ENCODE measurements at regions of chr11 and their contacts with region 1.

Region 1: GRCh38 chr11:61102667-61103571 is 630 bp downstream of the CD5 start:
- DNase-seq: peak; percentile 77
- H3K4me3 Mint-ChIP-seq: no peak overlapping the region
- H3K27ac Mint-ChIP-seq: no peak overlapping the region
- H3K4me1 Mint-ChIP-seq: peaks cover 34% of the 10 kb centered on the region
- H3K27me3 Mint-ChIP-seq: no peaks in the 10 kb centered on the region

Region 2: GRCh38 chr11:60951899-60952741 is 150.8 kb before region 1 on chr11 and contains the start of gene SLC15A3:
- intact Hi-C with region 1: no loop called
- DNase-seq: peak; percentile 77
- H3K4me3 Mint-ChIP-seq: peak within 1 kb of the TSS; percentile 82
- H3K27ac Mint-ChIP-seq: peak within 1 kb of the TSS; percentile 74
- H3K4me1 Mint-ChIP-seq: peaks cover 16% of the 10 kb centered on the region
- H3K27me3 Mint-ChIP-seq: peaks cover 33% of the 10 kb centered on the region
- total RNA-seq, gene SLC15A3: 3.0 and 4.0 TPM in 2 replicates

Region 3: DNA sequence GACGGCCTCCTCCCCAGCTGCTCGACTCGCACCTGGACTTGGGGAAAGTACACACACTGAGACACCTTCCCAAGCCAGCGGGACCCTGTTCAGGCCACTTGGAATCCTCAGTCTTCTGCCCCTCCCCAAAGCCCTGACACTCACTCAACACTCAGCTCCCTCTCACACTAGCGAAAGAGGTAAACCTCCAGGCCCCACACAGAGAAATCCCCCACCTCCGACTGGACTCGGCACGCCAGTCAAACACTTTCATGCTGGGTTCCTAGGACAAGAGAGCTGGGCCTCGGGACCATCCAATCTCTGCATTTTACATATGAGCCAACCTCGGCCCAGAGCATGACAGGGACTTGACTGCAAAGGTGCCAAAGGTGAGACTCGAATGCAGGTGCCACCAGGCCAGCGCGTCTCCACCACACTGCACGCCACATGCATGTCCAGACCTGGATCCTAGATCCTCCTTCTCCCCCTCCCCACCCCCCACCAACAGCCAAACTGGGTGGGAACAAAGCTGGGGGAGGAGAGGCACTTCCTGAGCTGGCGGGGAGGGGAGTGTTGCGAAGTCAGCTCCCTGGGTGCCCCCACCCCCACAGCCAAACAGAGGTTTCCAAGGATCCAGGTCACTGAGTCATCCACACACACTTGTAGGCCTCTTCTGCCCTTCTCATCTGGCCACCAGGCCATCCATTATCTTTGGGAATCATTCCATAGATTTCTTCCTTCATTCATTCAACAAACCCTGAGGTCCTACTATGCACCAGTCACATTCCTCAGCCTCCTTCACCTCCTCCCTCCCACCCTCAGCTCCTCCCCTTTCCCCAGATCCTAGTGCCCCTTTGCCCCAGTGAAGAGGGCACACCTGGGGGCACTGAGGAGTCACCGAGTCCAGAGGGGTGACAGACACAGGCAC is 11.3 kb before region 1 on chr11:
- intact Hi-C with region 1: loop called (anchors 1 kb)
- DNase-seq: peak; percentile 86
- H3K4me3 Mint-ChIP-seq: peak overlapping the region; percentile 93
- H3K27ac Mint-ChIP-seq: peak overlapping the region; percentile 100
- H3K4me1 Mint-ChIP-seq: peaks cover 69% of the 10 kb centered on the region
- H3K27me3 Mint-ChIP-seq: no peaks in the 10 kb centered on the region